Activated CD4-positive, alpha-beta T cell treated with anti-CD3 and anti-CD28 coated beads for 36 hours (primary cell): ENCODE measurements at regions of chr6 and their contacts with region 1.

Region 1: DNA sequence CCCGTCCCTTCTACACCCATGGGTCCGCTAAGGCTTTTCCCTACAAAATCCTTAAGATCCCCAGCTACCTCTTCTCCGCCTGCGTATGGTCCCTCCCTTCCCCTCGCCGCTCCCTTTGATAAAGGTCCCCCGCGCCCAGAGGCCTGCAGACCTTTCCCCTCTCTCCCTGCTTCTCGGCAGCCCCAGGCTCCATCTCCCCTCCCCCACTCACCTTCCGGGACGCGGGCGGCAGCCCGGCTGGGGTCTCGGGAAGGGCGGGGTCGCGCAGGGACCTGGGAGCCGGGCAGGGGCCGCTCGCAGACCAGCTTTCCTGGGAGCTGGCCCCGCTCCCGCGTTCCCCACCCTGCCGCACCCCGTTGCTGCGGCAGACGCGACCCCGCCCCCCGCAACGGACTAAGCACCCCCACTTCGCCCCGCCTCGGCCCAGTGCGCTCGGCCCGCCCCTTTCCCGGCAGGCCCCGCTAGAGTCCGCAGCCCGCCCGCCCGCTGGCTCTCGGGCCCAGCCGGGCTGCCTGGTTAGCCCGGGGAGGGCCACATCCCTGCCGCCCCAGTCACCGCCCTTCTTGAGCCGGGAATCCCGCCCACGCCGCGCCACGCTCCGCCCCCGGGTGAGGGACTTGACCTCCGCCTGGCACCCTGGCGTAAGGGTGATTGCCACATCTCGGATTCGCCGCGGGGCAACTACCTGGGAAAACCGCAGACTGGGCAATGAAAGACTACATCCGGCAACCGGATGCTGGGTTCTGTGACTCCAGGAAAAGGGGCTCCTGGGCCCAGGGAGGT is at the start of gene FLOT1:
- DNase-seq: peak; percentile 98
- ATAC-seq: peak; percentile 74
- H3K4me3 Mint-ChIP-seq: peak within 1 kb of the TSS; percentile 96
- H3K27ac Mint-ChIP-seq: peak within 1 kb of the TSS; percentile 95
- H3K4me1 Mint-ChIP-seq: peaks cover 67% of the 10 kb centered on the region
- H3K27me3 Mint-ChIP-seq: no peaks in the 10 kb centered on the region
- total RNA-seq, gene FLOT1: 155 to 188 TPM

Region 2: DNA sequence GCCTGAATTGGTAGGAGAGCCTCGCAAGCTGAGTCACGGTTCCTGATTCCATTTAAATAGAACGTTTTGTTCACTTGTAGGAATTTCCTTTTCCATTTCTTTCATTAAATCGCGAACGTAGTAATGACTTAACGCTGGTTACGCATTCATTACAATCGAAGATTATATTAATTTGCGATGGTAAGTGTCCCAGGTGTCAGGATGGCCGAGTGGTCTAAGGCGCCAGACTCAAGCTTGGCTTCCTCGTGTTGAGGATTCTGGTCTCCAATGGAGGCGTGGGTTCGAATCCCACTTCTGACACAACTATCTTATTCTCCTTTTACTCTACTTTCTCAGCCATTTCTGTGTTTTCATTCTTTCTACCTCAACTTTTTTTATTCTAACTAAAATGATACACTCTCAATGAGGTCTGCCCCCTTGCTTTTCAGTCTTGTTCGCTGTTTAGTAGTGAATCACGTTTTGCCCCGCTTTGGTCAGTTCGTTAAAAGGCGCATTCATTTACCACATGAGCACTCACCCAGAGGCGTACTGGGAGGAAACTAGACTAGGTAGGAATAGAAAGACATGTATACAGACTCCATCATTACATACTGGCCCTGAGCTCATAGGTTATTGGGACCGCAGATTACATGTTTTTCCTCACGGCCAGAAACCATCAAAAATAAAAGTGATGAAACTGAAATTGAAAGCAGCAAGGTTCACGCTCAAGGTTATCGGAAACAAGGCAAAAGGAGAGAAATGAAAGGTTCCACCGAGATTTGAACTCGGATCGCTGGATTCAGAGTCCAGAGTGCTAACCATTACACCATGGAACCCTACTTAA is 1801.4 kb before region 1 on chr6:
- CTCF ChIA-PET with region 1: no interaction called
- POLR2A ChIA-PET with region 1: no interaction called
- intact Hi-C with region 1: no loop called
- DNase-seq: peak; percentile 87
- ATAC-seq: peak; percentile 72
- H3K4me3 Mint-ChIP-seq: peak overlapping the region; percentile 79
- H3K27ac Mint-ChIP-seq: peak overlapping the region; percentile 96
- H3K4me1 Mint-ChIP-seq: peaks cover 39% of the 10 kb centered on the region
- H3K27me3 Mint-ChIP-seq: no peaks in the 10 kb centered on the region

Region 3: DNA sequence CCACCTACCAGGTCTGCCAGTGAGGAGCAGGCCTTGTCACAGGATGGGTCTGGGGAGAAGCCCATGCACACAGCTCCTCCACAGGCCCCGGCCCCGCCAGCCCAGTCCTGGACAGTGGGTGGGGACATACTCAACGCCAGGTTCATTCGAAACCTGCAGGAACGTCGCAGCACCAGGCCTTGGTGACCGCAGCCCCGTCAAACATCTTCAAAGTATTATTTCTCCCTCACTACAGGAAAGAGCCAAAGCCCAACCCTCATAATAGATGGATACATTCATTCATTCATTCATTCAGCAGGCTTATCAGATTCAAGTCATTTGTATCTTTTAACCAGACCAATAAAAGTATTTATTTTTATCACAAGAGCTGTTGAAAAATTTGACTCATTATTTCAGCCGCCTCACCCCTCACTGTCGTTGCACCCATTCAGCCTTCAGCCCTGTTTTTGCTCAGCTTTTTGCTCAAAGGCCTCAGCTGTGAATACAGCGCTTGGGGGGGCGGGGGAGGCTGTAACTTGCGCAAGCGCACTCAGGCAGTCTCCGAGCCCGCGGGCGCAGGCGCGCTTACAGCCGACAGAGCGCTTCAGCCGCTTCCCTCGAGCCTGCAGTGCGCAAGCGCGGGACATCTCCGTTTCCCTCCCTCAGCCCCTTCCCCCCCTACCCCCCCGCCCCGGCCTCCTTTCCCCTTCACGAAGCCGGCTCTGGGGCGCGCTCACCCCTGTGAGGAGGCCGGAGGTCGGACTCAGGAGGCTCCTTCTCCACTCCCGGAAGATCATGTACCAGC is 95.9 kb before region 1 on chr6 and contains the start of gene C6orf136:
- CTCF ChIA-PET with region 1: interaction called, 3 read pairs
- POLR2A ChIA-PET with region 1: no interaction called
- intact Hi-C with region 1: loop called in 1 of 2 experiments (anchors 1 kb)
- DNase-seq: peak; percentile 97
- ATAC-seq: peak; percentile 86
- H3K4me3 Mint-ChIP-seq: peak within 1 kb of the TSS; percentile 78
- H3K27ac Mint-ChIP-seq: peak within 1 kb of the TSS; percentile 88
- H3K4me1 Mint-ChIP-seq: peaks cover 20% of the 10 kb centered on the region
- H3K27me3 Mint-ChIP-seq: no peaks in the 10 kb centered on the region
- total RNA-seq, gene C6orf136: 26.5 to 30.8 TPM

Region 4: GRCh38 chr6:30769088-30769852 is 26.8 kb after region 1 on chr6:
- CTCF ChIA-PET with region 1: interaction called, 4 read pairs
- POLR2A ChIA-PET with region 1: interaction called, 10 read pairs
- intact Hi-C with region 1: loop called (anchors 1 kb)
- DNase-seq: peak; percentile 90
- ATAC-seq: peak; percentile 75
- H3K4me3 Mint-ChIP-seq: peak overlapping the region; percentile 63
- H3K27ac Mint-ChIP-seq: peak overlapping the region; percentile 98
- H3K4me1 Mint-ChIP-seq: peaks cover 86% of the 10 kb centered on the region
- H3K27me3 Mint-ChIP-seq: no peaks in the 10 kb centered on the region

Region 5: DNA sequence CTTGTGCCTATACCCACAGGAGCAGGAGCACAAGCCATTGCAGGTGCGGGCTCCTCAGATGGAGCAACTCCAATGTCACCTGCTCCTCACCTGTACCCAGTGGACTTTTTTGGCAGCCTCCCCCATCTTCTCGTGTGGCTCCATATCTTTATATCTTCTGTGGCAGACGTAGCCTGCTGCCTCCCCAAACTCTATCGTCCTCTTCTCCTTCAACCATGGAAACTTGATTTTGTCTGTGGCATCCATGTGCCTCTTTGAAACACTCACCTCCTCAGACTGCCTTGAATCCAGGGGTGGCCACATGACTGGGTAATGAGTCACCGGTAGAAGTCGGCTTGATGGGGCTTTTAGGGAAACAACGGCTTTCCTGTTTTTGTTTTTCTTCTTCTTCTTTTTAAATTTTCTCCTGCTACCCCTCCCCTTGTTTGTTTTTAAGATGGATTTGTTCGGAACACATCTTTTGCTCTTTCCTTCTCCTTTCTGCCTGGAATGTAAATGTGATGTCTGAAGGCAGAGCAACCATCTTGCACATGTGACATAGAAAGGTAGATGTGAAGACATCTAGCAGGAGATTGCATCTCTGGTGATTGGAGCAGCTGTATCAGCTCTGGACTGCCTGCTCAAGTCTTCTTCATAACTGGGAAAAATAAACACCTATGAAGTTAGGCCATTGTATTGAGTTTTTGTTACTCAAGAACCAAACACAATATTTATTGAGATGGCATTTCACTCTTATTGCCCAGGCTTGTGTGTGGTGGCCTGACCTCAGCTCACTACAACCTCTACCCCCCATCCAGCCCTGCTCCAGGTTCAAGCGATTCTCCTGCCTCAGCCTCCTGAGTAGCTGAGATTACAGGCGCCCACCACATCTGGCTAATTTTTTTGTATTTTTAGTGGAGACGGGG is 71.9 kb after region 1 on chr6:
- CTCF ChIA-PET with region 1: interaction called, 46 read pairs
- POLR2A ChIA-PET with region 1: interaction called, 4 read pairs
- intact Hi-C with region 1: loop called (anchors 1 kb)
- DNase-seq: peak; percentile 79
- ATAC-seq: peak; percentile 40
- H3K4me3 Mint-ChIP-seq: peak overlapping the region; percentile 38
- H3K27ac Mint-ChIP-seq: peak overlapping the region; percentile 96
- H3K4me1 Mint-ChIP-seq: peaks cover 91% of the 10 kb centered on the region
- H3K27me3 Mint-ChIP-seq: no peaks in the 10 kb centered on the region

Region 6: GRCh38 chr6:31356946-31357466 is 614.5 kb after region 1 on chr6 and contains the start of gene HLA-B:
- CTCF ChIA-PET with region 1: no interaction called
- POLR2A ChIA-PET with region 1: no interaction called
- intact Hi-C with region 1: loop called in 1 of 2 experiments (anchors 10 kb)
- DNase-seq: peak; percentile 91
- ATAC-seq: peak; percentile 80
- H3K4me3 Mint-ChIP-seq: peak within 1 kb of the TSS; percentile 98
- H3K27ac Mint-ChIP-seq: peak within 1 kb of the TSS; percentile 99
- H3K4me1 Mint-ChIP-seq: peaks cover 56% of the 10 kb centered on the region
- H3K27me3 Mint-ChIP-seq: peaks cover 5% of the 10 kb centered on the region
- total RNA-seq, gene HLA-B: 2,101 to 2,412 TPM